ENCODE measurements at regions of chr20 and their contacts with region 1.

Region 1: DNA sequence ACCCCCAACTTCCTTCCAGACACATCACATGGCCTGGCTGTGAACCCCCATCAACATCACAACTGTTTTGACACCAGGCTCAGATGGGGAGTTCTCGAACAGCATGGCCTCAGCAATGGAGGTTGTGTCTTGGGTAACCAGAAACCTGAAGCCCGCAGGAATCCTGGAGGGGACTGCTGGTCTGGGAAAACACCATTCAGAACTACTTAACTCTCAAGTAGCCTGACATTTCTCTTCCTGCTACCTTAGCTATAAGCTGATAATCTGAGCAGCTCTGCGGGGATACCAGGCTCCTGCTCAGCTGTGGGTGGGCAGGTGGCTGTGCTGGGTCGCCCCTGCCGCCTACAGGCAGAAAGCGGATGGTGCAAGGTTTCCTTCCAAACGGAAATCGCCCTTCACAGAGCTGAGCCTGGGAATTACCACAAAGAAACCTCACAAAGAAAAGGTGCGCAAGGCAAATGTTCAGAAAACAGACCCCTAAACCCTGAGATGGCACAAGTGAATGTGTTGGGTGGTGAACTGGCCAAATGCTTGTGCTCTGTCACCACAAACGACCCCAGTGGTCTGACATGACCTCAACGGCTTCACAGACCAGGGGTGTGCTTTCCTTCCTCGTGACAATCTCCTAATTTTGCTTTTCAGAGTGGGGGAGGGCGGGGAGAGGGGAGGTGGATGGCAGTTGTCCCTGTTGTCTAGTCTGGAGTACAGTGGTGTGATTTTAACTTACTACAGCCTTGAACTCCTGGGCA is 29.5 kb downstream of the SNX5 start:
- DNase-seq: peak; percentile 57 to 87
- H3K4me3 ChIP-seq: no peak overlapping the region
- H3K27ac ChIP-seq: peak overlapping the region; percentile 40; the same call in 1 of the 2 replicates
- H3K4me1 ChIP-seq: peaks cover 10 to 26% (median 17%) of the 10 kb centered on the region in 4 experiments
- H3K27me3 ChIP-seq: no peaks in the 10 kb centered on the region
- CTCF ChIP-seq: peak; percentile 92 to 99 (median 94)
- EP300 ChIP-seq: 0 out of 3 replicates have a peak, but pooled peaks of 1 of the 2 experiments have one; percentile 23
- POLR2A ChIP-seq: peak; percentile 50 to 65; a peak in 2 of 3 replicates
- RAD21 ChIP-seq: peak; percentile 94 to 98

Region 2: DNA sequence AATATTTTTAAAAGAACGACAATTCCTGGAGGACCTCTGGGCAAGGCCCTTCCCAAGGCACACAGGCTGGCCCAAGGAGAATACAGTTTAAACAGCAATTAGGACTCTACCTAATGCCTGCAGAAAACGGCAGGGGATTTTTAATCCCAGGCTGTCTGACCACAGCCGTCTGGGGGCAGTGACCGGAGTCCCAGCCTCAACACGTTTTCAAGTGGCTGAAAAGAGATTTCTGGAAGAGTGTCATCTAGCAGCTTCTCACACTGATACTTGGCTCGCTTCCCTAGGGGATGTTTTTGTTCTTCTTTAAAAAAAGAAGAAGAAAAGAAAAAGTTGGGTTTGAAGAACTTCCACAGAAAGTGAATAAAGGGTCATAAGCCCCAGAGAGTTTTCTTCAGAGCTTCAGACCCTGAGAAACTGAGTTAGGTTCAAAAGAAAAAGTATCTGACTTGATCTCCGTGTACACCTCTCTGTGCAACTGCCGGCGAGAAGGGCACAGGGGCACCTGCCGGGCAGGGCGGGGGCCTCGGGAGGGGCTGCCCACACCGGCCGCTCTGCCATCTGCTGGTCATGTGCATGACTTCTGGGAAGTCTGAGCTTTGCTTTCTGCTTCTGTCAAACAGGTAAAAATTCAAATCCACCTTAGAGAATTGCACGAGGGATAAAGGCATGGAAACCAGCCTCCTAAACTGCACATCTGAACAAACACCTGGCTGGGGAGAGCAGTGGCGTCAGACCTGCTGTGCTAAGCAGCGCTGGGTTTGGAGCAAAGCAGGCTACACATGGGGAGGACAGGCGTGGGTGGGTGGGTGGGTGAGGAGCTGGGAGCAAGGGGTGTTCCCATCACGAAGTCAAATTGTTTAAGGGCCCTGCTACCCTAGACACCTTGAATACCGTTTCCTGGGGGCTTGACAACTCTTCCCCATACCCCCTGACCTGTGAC is 290.0 kb before region 1 on chr20:
- CTCF ChIA-PET with region 1: interaction called, 26 read pairs
- POLR2A ChIA-PET with region 1: no interaction called
- DNase-seq: no peak
- H3K4me3 ChIP-seq: no peak overlapping the region
- H3K27ac ChIP-seq: no peak overlapping the region
- H3K4me1 ChIP-seq: peaks cover 1 to 6% (median 3%) of the 10 kb centered on the region in 4 experiments; a peak in 5 of 7 replicates
- H3K27me3 ChIP-seq: no peaks in the 10 kb centered on the region
- CTCF ChIP-seq: peak; percentile 44 to 59 (median 46)
- EP300 ChIP-seq: no peak
- POLR2A ChIP-seq: no peak
- RAD21 ChIP-seq: peak in 1 of 2 experiments; percentile 38; a peak in 2 of 4 replicates

Region 3: GRCh38 chr20:17682103-17682888 is 256.7 kb before region 1 on chr20 and contains the start of gene RRBP1:
- CTCF ChIA-PET with region 1: interaction called, 21 read pairs
- POLR2A ChIA-PET with region 1: interaction called, 12 read pairs
- DNase-seq: peak; percentile 93 to 95
- H3K4me3 ChIP-seq: peak within 1 kb of the TSS; percentile 87 to 96 (median 94)
- H3K27ac ChIP-seq: peak within 1 kb of the TSS; percentile 61; the same call in 1 of the 2 replicates
- H3K4me1 ChIP-seq: peaks cover 6 to 12% (median 9%) of the 10 kb centered on the region in 4 experiments; a peak in 6 of 7 replicates
- H3K27me3 ChIP-seq: no peaks in the 10 kb centered on the region
- CTCF ChIP-seq: peak; percentile 63 to 77 (median 67)
- EP300 ChIP-seq: peak in 1 of 2 experiments; percentile 31; a peak in 1 of 3 replicates
- POLR2A ChIP-seq: peak in 1 of 2 experiments; percentile 84; a peak in 2 of 3 replicates
- RAD21 ChIP-seq: peak; percentile 36 to 51; a peak in 3 of 4 replicates
- total RNA-seq, gene RRBP1: 153 and 157 TPM in 2 replicates

Region 4: GRCh38 chr20:17843246-17844132 is 95.6 kb before region 1 on chr20:
- CTCF ChIA-PET with region 1: no interaction called
- POLR2A ChIA-PET with region 1: no interaction called
- DNase-seq: no peak
- H3K4me3 ChIP-seq: no peak overlapping the region
- H3K27ac ChIP-seq: no peak overlapping the region
- H3K4me1 ChIP-seq: peaks cover 0 to 4% (median 0%) of the 10 kb centered on the region in 4 experiments; a peak in 2 of 7 replicates
- H3K27me3 ChIP-seq: no peaks in the 10 kb centered on the region
- CTCF ChIP-seq: no peak
- EP300 ChIP-seq: no peak
- POLR2A ChIP-seq: no peak
- RAD21 ChIP-seq: no peak

Region 5: GRCh38 chr20:17916433-17916891 is 22.6 kb before region 1 on chr20:
- CTCF ChIA-PET with region 1: interaction called, 15 read pairs
- POLR2A ChIA-PET with region 1: interaction called, 5 read pairs
- DNase-seq: no peak
- H3K4me3 ChIP-seq: no peak overlapping the region
- H3K27ac ChIP-seq: no peak overlapping the region
- H3K4me1 ChIP-seq: no peaks in the 10 kb centered on the region
- H3K27me3 ChIP-seq: no peaks in the 10 kb centered on the region
- CTCF ChIP-seq: no peak
- EP300 ChIP-seq: no peak
- POLR2A ChIP-seq: no peak
- RAD21 ChIP-seq: no peak

Region 6: GRCh38 chr20:17958373-17959256 is 19.6 kb after region 1 on chr20:
- CTCF ChIA-PET with region 1: interaction called, 6 read pairs
- POLR2A ChIA-PET with region 1: interaction called, 65 read pairs
- DNase-seq: no peak
- H3K4me3 ChIP-seq: no peak overlapping the region
- H3K27ac ChIP-seq: no peak overlapping the region
- H3K4me1 ChIP-seq: peaks cover 0 to 27% (median 6%) of the 10 kb centered on the region in 4 experiments; a peak in 5 of 7 replicates
- H3K27me3 ChIP-seq: no peaks in the 10 kb centered on the region
- CTCF ChIP-seq: no peak
- EP300 ChIP-seq: no peak
- POLR2A ChIP-seq: 0 out of 3 replicates have a peak, but pooled peaks of 1 of the 2 experiments have one; percentile 69
- RAD21 ChIP-seq: no peak

Region 7: GRCh38 chr20:18031050-18031449 is 92.0 kb after region 1 on chr20:
- CTCF ChIA-PET with region 1: no interaction called
- POLR2A ChIA-PET with region 1: no interaction called
- DNase-seq: no peak
- H3K4me3 ChIP-seq: no peak overlapping the region
- H3K27ac ChIP-seq: no peak overlapping the region
- H3K4me1 ChIP-seq: peaks cover 0 to 5% (median under 1%) of the 10 kb centered on the region in 4 experiments; a peak in 3 of 7 replicates
- H3K27me3 ChIP-seq: no peaks in the 10 kb centered on the region
- CTCF ChIP-seq: no peak
- EP300 ChIP-seq: no peak
- POLR2A ChIP-seq: no peak
- RAD21 ChIP-seq: no peak

Region 8: GRCh38 chr20:18072532-18072931 is 133.5 kb after region 1 on chr20:
- CTCF ChIA-PET with region 1: no interaction called
- POLR2A ChIA-PET with region 1: no interaction called
- DNase-seq: no peak
- H3K4me3 ChIP-seq: no peak overlapping the region
- H3K27ac ChIP-seq: no peak overlapping the region
- H3K4me1 ChIP-seq: no peaks in the 10 kb centered on the region
- H3K27me3 ChIP-seq: no peaks in the 10 kb centered on the region; a peak in 1 of 7 replicates
- CTCF ChIP-seq: no peak
- EP300 ChIP-seq: no peak
- POLR2A ChIP-seq: no peak
- RAD21 ChIP-seq: no peak